Body of pancreas (tissue), 4 donors: ENCODE measurements at regions of chr11 and their contacts with region 1.

Region 1: GRCh38 chr11:120229451-120230424 is 10.2 kb upstream of the POU2F3 start:
- DNase-seq: no peak
- ATAC-seq: no peak
- H3K4me3 ChIP-seq: no peak overlapping the region
- H3K27ac ChIP-seq: no peak overlapping the region
- H3K4me1 ChIP-seq: peaks cover 4% of the 10 kb centered on the region
- H3K27me3 ChIP-seq: no peaks in the 10 kb centered on the region
- CTCF ChIP-seq: peak; percentile 31 to 78 (median 62)
- POLR2A ChIP-seq: no peak

Region 2: DNA sequence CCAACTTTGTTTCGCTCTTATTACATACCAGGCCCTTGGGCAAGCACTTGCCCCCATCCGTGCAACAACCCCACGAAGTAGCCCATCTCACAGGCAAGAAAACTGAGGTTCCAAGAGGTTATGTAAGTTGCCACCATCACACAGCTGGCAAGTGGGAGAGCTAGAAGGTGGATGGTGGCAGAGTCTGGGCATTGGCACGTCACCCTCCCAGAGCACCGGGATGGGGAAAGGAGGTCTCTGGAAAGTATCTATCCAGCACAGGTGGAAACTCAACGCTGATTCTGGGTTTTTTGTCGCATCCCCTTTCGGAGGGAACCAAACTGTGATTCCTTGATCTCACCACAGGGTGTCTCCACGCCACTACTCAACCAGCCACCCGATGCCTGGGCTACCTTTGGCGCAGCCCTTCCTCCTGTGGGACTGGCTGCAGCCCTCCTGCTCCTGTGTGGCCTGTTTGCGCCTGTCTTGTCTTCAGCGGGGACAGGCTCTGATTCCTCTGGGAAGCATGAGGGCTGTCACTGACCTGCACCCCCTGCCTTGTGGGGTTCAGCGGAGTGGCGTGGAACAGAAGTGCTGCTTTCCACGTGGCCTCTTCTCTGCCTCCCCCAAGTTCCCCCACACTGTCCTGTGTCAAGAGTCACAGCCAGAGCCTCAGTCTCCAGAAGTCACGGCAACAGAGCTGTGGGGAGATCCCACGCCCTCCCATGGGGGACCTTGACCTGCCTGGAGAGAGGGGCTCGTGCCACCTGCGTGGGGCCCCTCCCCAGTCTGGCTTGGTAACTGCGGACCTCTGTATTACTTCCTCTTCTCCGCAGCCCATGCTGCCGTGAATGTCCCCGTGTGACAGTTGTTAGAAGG is 57.5 kb before region 1 on chr11:
- intact Hi-C with region 1: loop called (anchors 2 kb)
- DNase-seq: peak; percentile 76 to 83 (median 78)
- ATAC-seq: peak; percentile 77
- H3K4me3 ChIP-seq: no peak overlapping the region
- H3K27ac ChIP-seq: no peak overlapping the region
- H3K4me1 ChIP-seq: peaks cover 19% of the 10 kb centered on the region
- H3K27me3 ChIP-seq: no peaks in the 10 kb centered on the region
- CTCF ChIP-seq: peak; percentile 65 to 96 (median 92)
- POLR2A ChIP-seq: no peak